HCT116 (cell line): ENCODE measurements at regions of chr19 and their contacts with region 1.

Region 1: DNA sequence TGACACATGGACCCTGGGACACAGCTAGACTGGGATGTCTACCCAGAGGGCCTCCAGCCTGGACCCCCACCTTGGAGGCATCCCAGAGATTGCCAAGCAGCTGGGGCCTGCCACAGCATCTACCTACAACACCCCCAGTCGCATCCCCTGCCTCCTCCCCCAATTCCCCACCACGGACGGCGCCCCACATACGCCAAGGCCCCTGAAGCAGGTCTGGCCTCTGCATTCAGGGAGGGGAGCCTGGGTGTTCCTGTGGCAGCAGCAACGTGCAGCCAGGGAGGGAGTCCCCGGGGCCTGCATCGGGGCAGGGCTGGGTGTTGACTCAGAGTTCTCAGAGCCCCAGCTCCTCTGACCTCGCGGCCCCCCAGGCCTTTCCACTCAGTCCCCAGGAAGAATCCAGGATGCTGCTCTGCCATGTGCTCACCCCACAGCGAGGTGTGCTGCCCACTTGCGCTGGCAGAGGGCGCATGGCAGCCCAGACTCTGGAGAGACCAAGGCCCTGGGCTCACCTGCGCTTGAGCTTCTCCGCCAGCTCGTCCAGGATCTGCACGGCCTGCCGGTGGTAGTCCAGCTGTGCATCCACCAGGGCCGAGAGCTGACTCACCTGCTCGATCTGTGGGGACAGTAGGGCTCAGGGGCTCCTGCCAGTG is 19.6 kb downstream of the MPND start:
- DNase-seq: no peak
- ATAC-seq: peak; percentile 56
- H3K4me3 ChIP-seq: no peak overlapping the region
- H3K27ac ChIP-seq: peak overlapping the region; percentile 43; the same call in 1 of the 2 replicates
- H3K4me1 ChIP-seq: peaks cover 6 to 23% of the 10 kb centered on the region in 2 experiments; a peak in 3 of 4 replicates
- H3K27me3 ChIP-seq: no peaks in the 10 kb centered on the region
- CTCF ChIP-seq: peak; percentile 41 to 47 (median 46); a peak in 5 of 6 replicates
- POLR2A ChIP-seq: no peak
- RAD21 ChIP-seq: peak; percentile 48

Region 2: DNA sequence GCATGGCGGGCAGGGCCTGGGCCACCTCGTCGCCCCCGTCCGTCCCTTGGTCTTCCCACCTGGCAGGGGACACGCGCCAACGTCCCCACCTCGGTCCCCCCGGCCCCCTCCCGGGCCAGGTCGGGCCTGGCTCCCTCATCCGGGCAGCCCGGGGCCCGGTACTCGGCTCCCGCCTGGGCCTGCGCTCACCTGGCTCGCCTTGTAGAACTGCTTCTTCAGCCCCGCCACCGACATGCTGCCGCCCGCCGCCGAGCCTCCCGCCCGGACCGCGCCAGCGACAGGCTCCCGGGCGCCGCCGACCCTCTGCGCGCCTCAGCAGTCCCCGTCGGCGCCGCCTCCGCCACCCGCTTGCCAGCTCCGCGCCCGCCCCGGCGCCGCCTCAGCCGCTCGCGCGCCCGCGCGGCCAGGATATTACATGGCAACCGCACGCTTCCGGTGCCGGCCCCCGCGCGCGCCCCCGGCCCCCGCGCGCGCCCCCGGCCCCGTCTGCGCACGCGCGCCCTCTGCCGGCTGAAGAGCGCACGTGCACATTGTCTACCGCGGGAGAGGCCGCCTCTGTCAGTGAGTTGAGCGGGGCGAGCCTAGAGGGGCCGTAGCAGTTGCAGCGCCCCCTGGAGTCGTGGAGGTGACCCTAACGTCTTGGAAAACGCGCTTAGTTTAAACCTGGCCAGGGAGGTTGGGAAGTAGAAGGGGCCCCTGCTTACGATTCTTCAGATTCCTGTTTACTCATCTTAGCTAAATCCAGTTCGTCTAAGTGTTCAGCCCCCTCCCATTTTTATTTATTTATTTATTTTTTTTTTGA is 37.4 kb after region 1 on chr19 and contains the start of gene SH3GL1:
- CTCF ChIA-PET with region 1: interaction called, 3 read pairs
- POLR2A ChIA-PET with region 1: interaction called, 4 read pairs
- RAD21 ChIA-PET with region 1: interaction called in 1 of 2 experiments, 4 read pairs
- intact Hi-C with region 1: loop called (anchors 5 kb)
- DNase-seq: peak; percentile 86
- ATAC-seq: peak; percentile 71
- H3K4me3 ChIP-seq: peak within 1 kb of the TSS; percentile 93 to 97
- H3K27ac ChIP-seq: peak within 1 kb of the TSS; percentile 88
- H3K4me1 ChIP-seq: peaks cover 16 to 44% of the 10 kb centered on the region in 2 experiments
- H3K27me3 ChIP-seq: no peaks in the 10 kb centered on the region
- CTCF ChIP-seq: peak; percentile 89 to 98 (median 89)
- POLR2A ChIP-seq: peak; percentile 38
- RAD21 ChIP-seq: peak; percentile 58
- total RNA-seq, gene SH3GL1: 86.0 TPM